Gastrocnemius medialis (tissue), 4 donors: ENCODE measurements at regions of chr17 and their contacts with region 1.

Region 1: DNA sequence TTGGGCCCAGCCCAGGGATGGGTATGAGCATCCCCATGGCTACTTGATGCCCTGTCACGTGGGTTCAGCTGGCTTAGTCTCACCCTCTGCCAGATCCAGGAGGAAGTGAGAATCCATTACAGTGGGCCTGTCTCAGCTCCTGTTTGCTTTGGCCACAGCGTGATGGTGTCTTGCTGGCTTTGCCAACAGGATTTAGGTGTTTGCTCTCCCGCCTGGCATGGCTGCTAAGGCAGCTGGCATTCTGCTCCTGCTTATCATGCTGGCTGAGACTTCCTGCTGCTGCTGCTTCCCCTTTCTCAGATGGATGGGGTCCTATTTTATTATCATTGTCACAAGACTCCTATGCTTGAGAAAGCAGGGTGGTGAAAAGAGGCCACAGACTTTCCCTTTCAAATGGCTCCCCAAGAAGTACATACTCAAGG is 28.3 kb upstream of the HOXB13 start:
- DNase-seq: no peak
- ATAC-seq: no peak
- H3K4me3 ChIP-seq: no peak overlapping the region
- H3K27ac ChIP-seq: no peak overlapping the region
- H3K4me1 ChIP-seq: peaks cover 0 to 12% of the 10 kb centered on the region in 2 donors
- H3K27me3 ChIP-seq: peaks cover 73 to 92% (median 85%) of the 10 kb centered on the region in 3 donors
- CTCF ChIP-seq: no peak
- POLR2A ChIP-seq: no peak

Region 2: GRCh38 chr17:48564188-48565021 is 192.4 kb before region 1 on chr17:
- in situ Hi-C with region 1: no loop called
- intact Hi-C with region 1: no loop called
- DNase-seq: no peak
- ATAC-seq: peak in 1 of 2 donors; percentile 39
- H3K4me3 ChIP-seq: peak overlapping the region; percentile 53 to 62 (median 56)
- H3K27ac ChIP-seq: peak overlapping the region; percentile 4 to 67 (median 62)
- H3K4me1 ChIP-seq: no peaks in the 10 kb centered on the region
- H3K27me3 ChIP-seq: peaks cover 14 to 21% (median 15%) of the 10 kb centered on the region in 3 donors
- CTCF ChIP-seq: no peak
- POLR2A ChIP-seq: no peak

Region 3: GRCh38 chr17:48625495-48626244 is 131.2 kb before region 1 on chr17:
- in situ Hi-C with region 1: no loop called
- intact Hi-C with region 1: no loop called
- DNase-seq: no peak
- ATAC-seq: peak in 1 of 2 donors; percentile 30
- H3K4me3 ChIP-seq: peak overlapping the region; percentile 39 to 53 (median 48)
- H3K27ac ChIP-seq: no peak overlapping the region
- H3K4me1 ChIP-seq: peaks cover 13 to 26% of the 10 kb centered on the region in 2 donors
- H3K27me3 ChIP-seq: peaks cover 94 to 100% (median 98%) of the 10 kb centered on the region in 3 donors
- CTCF ChIP-seq: no peak
- POLR2A ChIP-seq: no peak

Region 4: DNA sequence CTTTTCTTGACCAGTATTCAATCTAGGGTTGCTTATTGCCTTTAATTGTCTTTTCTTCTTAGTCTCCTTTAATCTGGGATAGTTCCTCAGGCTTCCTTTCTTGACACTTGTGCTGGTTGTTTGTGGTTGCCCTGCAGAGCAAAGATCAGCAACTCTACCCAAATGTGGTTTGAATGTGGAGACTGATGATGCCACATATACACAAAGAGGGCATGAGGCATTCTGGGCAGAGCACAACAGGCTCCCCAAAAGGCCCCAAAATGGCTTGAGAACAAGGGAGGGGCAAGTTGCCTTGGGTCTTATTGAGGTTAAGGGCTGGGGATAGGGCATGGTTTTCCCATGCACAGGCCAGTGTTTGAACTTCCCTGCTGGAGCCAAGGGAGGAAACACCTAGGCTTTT is 100.9 kb before region 1 on chr17:
- in situ Hi-C with region 1: no loop called
- intact Hi-C with region 1: loop called (anchors 10 kb)
- DNase-seq: no peak
- ATAC-seq: no peak
- H3K4me3 ChIP-seq: no peak overlapping the region
- H3K27ac ChIP-seq: no peak overlapping the region
- H3K4me1 ChIP-seq: no peaks in the 10 kb centered on the region
- H3K27me3 ChIP-seq: peaks cover 2 to 6% (median 4%) of the 10 kb centered on the region in 3 donors
- CTCF ChIP-seq: no peak
- POLR2A ChIP-seq: no peak

Region 5: DNA sequence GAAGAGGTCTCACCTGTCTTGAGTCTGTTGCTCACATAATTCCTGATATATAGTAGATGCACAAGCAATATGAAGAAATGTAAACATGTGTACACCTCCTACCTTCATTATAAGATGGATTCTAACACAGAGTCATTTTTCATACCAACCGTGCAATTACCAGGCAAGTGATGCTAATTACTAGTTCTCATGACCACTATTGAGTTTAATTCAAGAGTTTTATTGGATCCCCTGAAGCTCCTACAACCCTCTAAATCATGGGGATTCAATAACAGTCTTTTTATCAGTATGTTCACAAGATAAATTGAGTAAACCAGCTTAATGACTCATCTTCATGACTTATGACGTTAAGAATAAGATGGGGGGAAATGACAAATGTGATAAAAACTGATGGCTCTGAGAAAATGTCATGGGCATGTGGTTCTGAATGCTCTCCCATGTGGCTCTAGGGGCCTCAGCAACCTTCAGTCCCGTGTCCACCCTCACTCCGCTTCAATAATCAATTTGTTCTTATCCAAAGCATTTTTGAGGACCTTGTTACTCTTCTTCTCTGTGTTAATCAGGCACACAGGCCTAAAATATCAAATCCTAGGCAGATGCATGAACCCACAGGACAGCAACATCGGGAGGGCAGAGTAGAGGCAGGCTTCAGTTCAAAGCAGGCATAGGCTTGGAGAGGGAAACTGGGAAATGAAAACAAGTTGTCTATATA is 77.3 kb before region 1 on chr17:
- in situ Hi-C with region 1: no loop called
- intact Hi-C with region 1: no loop called
- DNase-seq: no peak
- ATAC-seq: no peak
- H3K4me3 ChIP-seq: no peak overlapping the region
- H3K27ac ChIP-seq: no peak overlapping the region
- H3K4me1 ChIP-seq: peaks cover 0 to 4% of the 10 kb centered on the region in 2 donors
- H3K27me3 ChIP-seq: peaks cover 5 to 16% (median 10%) of the 10 kb centered on the region in 3 donors
- CTCF ChIP-seq: no peak
- POLR2A ChIP-seq: no peak